ENCODE measurements at regions of chrX and their contacts with region 1.

Region 1: DNA sequence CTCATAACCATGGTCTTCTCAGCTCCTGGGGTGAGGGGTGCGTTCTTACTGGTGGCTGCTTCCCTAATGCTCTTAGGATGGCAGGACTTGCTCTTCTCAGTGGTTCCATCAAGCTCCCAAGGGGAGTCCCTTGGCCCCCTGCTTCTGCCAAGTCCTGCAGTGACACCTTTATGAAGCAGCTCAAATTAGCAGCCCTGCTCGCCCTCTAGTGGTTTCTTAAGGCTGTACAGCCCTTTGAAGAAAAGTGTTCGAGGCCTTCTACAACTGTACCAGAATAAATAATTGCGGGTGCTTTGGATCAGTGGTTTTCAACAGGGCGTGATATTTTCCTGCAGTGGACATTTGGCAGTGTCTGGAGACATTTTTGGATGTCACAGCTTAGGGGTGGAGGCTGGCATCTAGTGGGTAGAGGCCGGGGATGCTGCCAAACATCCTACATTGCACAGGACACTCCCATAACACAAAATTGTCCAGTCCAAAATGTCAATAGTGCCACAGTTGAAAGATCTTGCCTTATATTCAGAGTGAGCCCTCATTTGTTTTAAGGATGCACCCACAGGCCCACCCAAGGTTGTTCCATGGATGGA is 204.7 kb upstream of the S100G start:
- DNase-seq: peak; percentile 41
- H3K4me3 ChIP-seq: no peak overlapping the region
- H3K27ac ChIP-seq: no peak overlapping the region; a peak in 1 of 4 replicates
- H3K4me1 ChIP-seq: no peaks in the 10 kb centered on the region; a peak in 2 of 4 replicates
- H3K27me3 ChIP-seq: no peaks in the 10 kb centered on the region
- CTCF ChIP-seq: peak; percentile 81
- EP300 ChIP-seq: no peak
- RAD21 ChIP-seq: peak; percentile 66

Region 2: GRCh38 chrX:15815779-15816437 is 629.4 kb before region 1 on chrX:
- CTCF ChIA-PET with region 1: interaction called, 11 read pairs
- POLR2A ChIA-PET with region 1: no interaction called
- DNase-seq: peak; percentile 59
- H3K4me3 ChIP-seq: no peak overlapping the region
- H3K27ac ChIP-seq: no peak overlapping the region; a peak in 1 of 4 replicates
- H3K4me1 ChIP-seq: no peaks in the 10 kb centered on the region; a peak in 2 of 4 replicates
- H3K27me3 ChIP-seq: no peaks in the 10 kb centered on the region
- CTCF ChIP-seq: peak; percentile 42
- EP300 ChIP-seq: no peak
- RAD21 ChIP-seq: peak; percentile 61

Region 3: DNA sequence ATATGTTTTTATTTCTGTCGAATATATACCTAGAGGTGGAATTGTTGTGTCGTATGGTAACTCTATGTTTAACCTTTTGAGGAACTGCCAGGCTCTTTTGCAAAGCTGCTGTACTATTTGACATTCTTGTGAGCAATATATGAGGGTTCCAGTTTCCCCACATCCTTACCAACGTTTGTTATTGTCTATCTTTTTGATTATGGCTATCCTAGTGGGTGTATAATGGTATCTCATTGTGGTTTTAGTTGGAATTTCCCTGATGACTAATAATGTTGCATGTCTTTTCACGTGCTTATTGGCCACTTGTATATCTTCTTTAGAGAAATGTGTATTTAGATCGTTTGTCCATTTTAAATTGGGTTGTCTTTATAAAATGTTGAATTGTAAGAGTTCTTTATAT is 525.7 kb after region 1 on chrX:
- CTCF ChIA-PET with region 1: no interaction called
- POLR2A ChIA-PET with region 1: no interaction called
- DNase-seq: no peak
- H3K4me3 ChIP-seq: no peak overlapping the region
- H3K27ac ChIP-seq: no peak overlapping the region
- H3K4me1 ChIP-seq: no peaks in the 10 kb centered on the region
- H3K27me3 ChIP-seq: no peaks in the 10 kb centered on the region
- CTCF ChIP-seq: no peak
- EP300 ChIP-seq: no peak
- RAD21 ChIP-seq: no peak

Measured in SK-N-SH (cell line).